Activated naive CD4-positive, alpha-beta T cell treated with anti-CD3 and anti-CD28 coated beads for 36 hours (primary cell): ENCODE measurements at regions of chr9 and their contacts with region 1.

Region 1: GRCh38 chr9:92986176-92987085 is 39.1 kb downstream of the FGD3 start:
- DNase-seq: peak; percentile 84
- H3K4me3 Mint-ChIP-seq: no peak overlapping the region
- H3K27ac Mint-ChIP-seq: peak overlapping the region; percentile 92
- H3K4me1 Mint-ChIP-seq: peaks cover 73% of the 10 kb centered on the region
- H3K27me3 Mint-ChIP-seq: no peaks in the 10 kb centered on the region

Region 2: GRCh38 chr9:92963831-92964626 is 22.4 kb before region 1 on chr9:
- CTCF ChIA-PET with region 1: interaction called, 3 read pairs
- intact Hi-C with region 1: loop called (anchors 1 kb)
- DNase-seq: peak; percentile 86
- H3K4me3 Mint-ChIP-seq: peak overlapping the region; percentile 99
- H3K27ac Mint-ChIP-seq: peak overlapping the region; percentile 100
- H3K4me1 Mint-ChIP-seq: peaks cover 56% of the 10 kb centered on the region
- H3K27me3 Mint-ChIP-seq: no peaks in the 10 kb centered on the region